Activated B cell treated with CpG ODN at 0.5 μM for 24 hours (primary cell): ENCODE measurements at regions of chr20 and their contacts with region 1.

Region 1: GRCh38 chr20:38962044-38962927 is at the start of gene DHX35:
- DNase-seq: peak; percentile 99
- ATAC-seq: peak; percentile 96
- H3K4me3 Mint-ChIP-seq: peak within 1 kb of the TSS; percentile 95
- H3K27ac Mint-ChIP-seq: peak within 1 kb of the TSS; percentile 98
- H3K4me1 Mint-ChIP-seq: peaks cover 19% of the 10 kb centered on the region
- H3K27me3 Mint-ChIP-seq: no peaks in the 10 kb centered on the region
- CTCF ChIP-seq: no peak
- total RNA-seq, gene DHX35: 9.5 TPM in 2 replicates

Region 2: DNA sequence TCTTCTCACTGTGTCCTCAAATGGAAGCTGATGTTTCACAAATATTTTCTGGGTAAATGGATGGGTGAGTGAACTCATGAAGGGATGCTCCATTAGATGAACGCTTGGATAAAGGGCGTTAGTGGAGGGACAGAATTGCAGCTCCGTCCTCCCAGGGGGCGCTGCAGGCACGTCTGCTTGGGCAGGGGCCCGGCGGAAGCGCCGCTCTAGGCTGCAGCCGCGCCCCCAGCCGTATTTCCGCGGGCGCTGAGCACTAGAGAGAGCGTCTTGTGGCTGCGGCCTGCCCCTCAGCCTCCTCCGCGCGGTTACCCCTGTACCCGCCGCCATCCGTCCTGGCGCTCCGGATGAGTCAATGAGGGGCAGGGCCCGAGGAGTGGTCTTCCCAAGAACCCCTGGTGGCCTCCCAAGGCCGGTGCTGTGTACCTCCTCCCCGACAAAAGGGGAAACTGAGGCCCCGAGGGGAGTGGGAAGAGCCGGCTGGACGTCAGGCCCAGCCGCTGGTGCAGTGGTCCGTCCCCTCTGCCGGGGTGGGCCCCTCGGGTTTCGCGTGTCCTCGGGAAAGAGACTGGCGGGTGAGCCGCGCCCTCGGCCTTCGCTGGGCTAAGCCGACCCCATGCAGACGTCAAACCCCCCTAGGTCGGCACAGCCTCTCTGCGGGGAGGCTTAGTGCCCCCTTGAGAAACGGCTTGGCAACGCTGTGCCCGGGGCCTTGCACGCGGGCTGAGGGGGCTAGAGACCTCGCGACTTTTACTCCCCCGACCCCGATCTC is 515.7 kb before region 1 on chr20:
- CTCF ChIA-PET with region 1: no interaction called
- POLR2A ChIA-PET with region 1: no interaction called
- intact Hi-C with region 1: loop called (anchors 10 kb)
- DNase-seq: peak; percentile 93
- ATAC-seq: peak; percentile 88
- H3K4me3 Mint-ChIP-seq: peak overlapping the region; percentile 87
- H3K27ac Mint-ChIP-seq: peak overlapping the region; percentile 74
- H3K4me1 Mint-ChIP-seq: peaks cover 29% of the 10 kb centered on the region
- H3K27me3 Mint-ChIP-seq: peaks cover 7% of the 10 kb centered on the region
- CTCF ChIP-seq: peak; percentile 66

Region 3: GRCh38 chr20:38645980-38646858 is 316.1 kb before region 1 on chr20:
- CTCF ChIA-PET with region 1: interaction called, 3 read pairs
- POLR2A ChIA-PET with region 1: interaction called, 4 read pairs
- intact Hi-C with region 1: loop called (anchors 1 kb)
- DNase-seq: peak; percentile 93
- ATAC-seq: peak; percentile 98
- H3K4me3 Mint-ChIP-seq: peak overlapping the region; percentile 81
- H3K27ac Mint-ChIP-seq: no peak overlapping the region
- H3K4me1 Mint-ChIP-seq: peaks cover 22% of the 10 kb centered on the region
- H3K27me3 Mint-ChIP-seq: peaks cover 30% of the 10 kb centered on the region
- CTCF ChIP-seq: peak; percentile 45

Region 4: GRCh38 chr20:38805502-38805957 is 156.8 kb before region 1 on chr20 and contains the start of gene PPP1R16B:
- CTCF ChIA-PET with region 1: interaction called, 4 read pairs
- POLR2A ChIA-PET with region 1: interaction called, 17 read pairs
- intact Hi-C with region 1: loop called (anchors 1 kb)
- DNase-seq: peak; percentile 80
- ATAC-seq: peak; percentile 77
- H3K4me3 Mint-ChIP-seq: peak within 1 kb of the TSS; percentile 93
- H3K27ac Mint-ChIP-seq: peak within 1 kb of the TSS; percentile 91
- H3K4me1 Mint-ChIP-seq: peaks cover 51% of the 10 kb centered on the region
- H3K27me3 Mint-ChIP-seq: no peaks in the 10 kb centered on the region
- CTCF ChIP-seq: no peak
- total RNA-seq, gene PPP1R16B: 98.3 and 99.3 TPM in 2 replicates

Region 5: DNA sequence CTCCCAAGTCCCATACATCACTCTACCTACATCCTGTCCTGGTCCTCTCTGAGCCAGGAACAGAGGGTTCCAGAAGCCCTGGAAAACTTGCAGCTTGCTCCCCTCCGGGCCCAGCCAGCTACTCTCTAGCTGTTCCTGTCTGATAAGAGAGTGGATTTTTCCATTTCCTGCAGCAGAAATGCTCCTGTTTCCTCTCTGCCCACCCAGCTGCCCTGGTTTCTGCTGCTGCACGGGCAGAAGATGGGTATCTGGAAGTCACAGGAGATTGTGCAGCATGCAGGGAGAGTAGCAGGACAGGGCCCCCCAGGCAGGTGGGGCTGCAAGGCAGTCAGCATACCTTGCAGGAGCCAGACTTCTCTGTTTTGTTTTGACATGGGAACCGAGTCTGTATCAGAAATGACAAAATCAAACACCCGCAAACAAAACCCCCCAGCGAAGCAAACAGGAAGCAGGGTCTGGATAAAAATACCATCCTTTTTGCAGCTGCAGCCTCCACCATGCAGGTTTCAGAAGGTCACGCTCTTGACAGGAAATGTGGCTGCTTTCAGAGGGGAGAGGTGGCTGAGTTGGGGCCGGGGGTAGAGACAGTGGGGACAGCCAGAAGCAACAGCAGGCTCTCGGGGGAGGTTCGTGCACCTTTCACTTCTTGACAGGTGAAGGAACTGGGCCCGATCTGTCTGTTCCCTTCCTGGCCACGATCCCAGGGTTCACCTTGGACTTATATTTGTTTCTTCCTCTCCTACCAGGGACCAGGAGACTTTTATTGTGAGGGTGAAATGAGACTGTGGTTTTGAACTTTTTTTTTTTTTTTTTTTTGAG is 86.9 kb before region 1 on chr20:
- CTCF ChIA-PET with region 1: no interaction called
- POLR2A ChIA-PET with region 1: interaction called, 5 read pairs
- intact Hi-C with region 1: loop called (anchors 2 kb)
- DNase-seq: peak; percentile 60
- ATAC-seq: peak; percentile 63
- H3K4me3 Mint-ChIP-seq: peak overlapping the region; percentile 83
- H3K27ac Mint-ChIP-seq: peak overlapping the region; percentile 97
- H3K4me1 Mint-ChIP-seq: peaks cover 98% of the 10 kb centered on the region
- H3K27me3 Mint-ChIP-seq: no peaks in the 10 kb centered on the region
- CTCF ChIP-seq: no peak

Region 6: DNA sequence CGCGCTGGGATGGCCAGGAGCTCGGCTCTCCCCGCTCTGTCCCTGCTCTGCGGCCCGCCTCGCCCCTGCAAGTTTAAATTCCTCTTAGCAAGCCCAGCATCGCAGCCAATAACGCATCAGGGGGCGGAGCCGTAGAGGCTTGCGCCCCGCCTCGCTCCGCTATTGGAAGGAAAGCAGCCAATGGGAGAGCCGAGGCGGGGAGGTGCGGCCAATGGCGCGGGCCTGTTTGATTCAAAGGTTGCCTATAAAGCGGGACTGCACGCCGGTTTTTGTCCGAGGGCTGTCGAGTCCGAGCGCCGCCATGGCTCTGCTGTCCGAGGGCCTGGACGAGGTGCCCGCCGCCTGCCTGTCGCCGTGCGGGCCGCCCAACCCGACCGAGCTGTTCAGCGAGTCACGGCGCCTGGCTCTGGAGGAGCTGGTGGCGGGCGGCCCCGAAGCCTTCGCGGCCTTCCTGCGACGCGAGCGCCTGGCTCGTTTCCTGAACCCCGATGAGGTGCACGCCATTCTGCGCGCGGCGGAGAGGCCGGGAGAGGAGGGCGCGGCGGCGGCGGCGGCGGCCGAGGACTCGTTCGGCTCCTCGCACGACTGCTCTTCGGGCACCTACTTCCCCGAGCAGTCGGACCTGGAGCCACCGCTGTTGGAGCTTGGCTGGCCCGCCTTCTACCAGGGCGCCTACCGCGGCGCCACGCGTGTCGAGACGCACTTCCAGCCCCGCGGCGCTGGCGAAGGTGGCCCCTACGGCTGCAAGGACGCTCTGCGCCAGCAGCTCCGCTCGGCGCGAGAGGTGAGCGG is 35.9 kb before region 1 on chr20 and contains the start of gene FAM83D:
- CTCF ChIA-PET with region 1: interaction called, 8 read pairs
- POLR2A ChIA-PET with region 1: interaction called, 19 read pairs
- intact Hi-C with region 1: loop called (anchors 1 kb)
- DNase-seq: peak; percentile 86
- ATAC-seq: peak; percentile 95
- H3K4me3 Mint-ChIP-seq: peak within 1 kb of the TSS; percentile 77
- H3K27ac Mint-ChIP-seq: peak within 1 kb of the TSS; percentile 65
- H3K4me1 Mint-ChIP-seq: peaks cover 12% of the 10 kb centered on the region
- H3K27me3 Mint-ChIP-seq: peaks cover 3% of the 10 kb centered on the region
- CTCF ChIP-seq: no peak
- total RNA-seq, gene FAM83D: 0.93 and 1.2 TPM in 2 replicates

Region 7: DNA sequence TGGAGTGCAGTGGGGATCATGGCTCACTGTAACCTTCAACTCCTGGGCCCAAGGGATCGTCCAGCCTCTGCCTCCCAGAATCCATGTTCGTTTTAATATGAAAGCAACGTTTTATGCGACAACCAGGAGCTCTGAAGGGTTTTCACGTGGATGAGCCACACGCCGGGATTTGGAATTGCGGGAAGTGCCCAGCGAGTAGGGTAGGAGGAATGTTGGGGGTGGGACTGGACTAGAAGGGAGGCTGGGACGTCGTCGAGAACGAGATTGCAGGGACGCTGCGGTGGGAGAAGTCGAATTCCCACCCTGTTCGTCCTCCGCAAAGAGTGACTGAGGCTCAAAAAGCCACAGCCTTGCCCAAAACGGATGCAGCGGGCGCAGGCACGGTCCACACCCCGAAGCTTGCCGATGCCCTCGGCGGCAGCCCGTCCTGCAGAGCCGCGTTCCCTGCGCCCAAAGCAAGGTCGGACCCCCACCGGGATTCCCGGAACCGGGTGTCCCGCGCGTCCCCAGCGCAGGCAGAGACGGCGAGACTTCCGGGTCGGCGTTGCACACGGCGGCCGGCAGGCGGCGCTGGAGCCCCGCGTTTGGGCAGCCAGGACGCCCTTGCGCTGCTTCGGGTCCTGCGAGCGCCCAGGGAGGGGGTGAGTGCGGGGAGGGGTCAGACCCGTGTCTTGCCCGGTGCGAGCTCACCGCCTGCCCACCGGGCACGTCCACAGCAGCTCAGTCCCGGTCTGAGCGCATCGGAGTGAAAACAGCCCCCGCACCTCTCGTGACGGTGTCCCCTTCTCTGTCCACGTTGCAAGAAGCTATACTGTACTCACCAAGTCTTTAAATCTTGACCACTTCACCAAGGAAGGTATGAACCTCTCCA is 87.6 kb after region 1 on chr20:
- CTCF ChIA-PET with region 1: interaction called, 9 read pairs
- POLR2A ChIA-PET with region 1: interaction called, 15 read pairs
- intact Hi-C with region 1: loop called (anchors 1 kb)
- DNase-seq: peak; percentile 83
- ATAC-seq: peak; percentile 87
- H3K4me3 Mint-ChIP-seq: peak overlapping the region; percentile 83
- H3K27ac Mint-ChIP-seq: peak overlapping the region; percentile 10
- H3K4me1 Mint-ChIP-seq: peaks cover 6% of the 10 kb centered on the region
- H3K27me3 Mint-ChIP-seq: peaks cover 5% of the 10 kb centered on the region
- CTCF ChIP-seq: no peak

Region 8: DNA sequence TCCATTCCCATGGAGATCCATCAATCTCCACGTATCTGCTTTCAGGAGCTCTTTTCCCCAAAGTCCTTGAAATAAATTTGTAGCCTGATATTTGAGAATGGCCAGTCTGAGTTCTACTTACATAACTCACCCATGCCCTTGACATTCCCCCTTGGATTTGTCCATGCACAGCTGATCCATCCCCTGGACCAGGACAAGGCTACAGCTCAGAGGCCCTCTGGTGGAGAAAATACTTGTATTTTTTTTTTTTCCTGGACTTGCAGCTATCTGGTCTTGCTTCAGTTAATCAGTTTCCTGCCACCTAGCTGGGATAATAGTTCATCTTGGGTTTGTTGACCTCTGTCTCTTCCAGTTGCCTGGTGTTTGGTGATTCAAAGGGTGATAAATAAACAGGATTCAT is 467.4 kb after region 1 on chr20:
- CTCF ChIA-PET with region 1: no interaction called
- POLR2A ChIA-PET with region 1: no interaction called
- intact Hi-C with region 1: no loop called
- DNase-seq: no peak
- ATAC-seq: no peak
- H3K4me3 Mint-ChIP-seq: no peak overlapping the region
- H3K27ac Mint-ChIP-seq: no peak overlapping the region
- H3K4me1 Mint-ChIP-seq: peaks cover 1% of the 10 kb centered on the region
- H3K27me3 Mint-ChIP-seq: no peaks in the 10 kb centered on the region
- CTCF ChIP-seq: no peak